H1 (cell line): ENCODE measurements at regions of chr10 and their contacts with region 1.

Region 1: DNA sequence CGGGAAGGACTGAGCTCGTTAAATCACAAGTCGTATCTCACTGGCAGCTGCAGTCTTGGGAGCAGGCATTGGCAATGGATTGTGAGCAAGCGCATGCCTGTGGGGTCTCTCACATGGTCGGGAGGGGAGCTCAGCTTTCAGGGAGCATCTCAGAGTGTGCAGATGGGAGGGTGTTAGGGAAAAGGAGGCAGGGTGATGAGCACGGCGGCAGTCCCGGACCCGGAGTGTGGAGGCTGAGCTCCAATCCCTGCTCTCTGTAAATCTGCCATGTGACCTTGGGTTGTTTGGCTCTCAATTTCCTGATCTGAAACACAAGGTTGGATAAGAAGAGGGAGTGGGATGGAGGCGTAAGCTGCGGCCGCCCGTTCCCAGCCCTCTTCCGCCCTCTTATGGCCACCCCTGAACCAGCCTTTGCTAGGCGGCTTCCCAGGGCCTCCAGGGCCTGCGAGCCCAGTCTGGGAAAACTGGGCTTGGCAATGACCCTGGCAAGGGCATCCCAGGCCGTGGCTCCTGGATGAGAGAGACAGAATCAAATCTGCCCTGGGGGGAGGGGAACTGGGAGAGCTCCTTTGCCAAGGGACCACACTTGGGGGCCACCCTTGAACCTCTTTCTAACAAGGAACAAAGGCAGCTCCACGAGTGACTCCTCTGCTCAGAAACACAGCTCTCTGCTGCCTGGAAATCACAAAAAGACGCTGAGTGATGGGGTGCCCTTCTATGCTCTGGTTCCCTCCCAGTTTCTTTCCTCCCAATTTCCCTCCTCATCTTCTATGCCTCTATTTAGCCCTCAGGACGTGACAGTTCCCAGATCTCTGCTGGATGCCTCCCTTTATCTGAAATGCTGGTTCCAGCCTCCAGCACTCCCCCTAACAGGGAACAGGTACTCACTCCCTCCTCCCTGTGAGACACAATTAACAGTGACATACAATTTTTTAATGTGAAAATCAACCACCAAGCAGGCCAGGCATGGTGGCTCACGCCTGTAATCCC is 41.7 kb upstream of the LOXL4 start:
- DNase-seq: peak; percentile 58 to 86
- H3K4me3 ChIP-seq: peak overlapping the region in 3 of 4 experiments; percentile 13 to 48 (median 36); a peak in 6 of 8 replicates
- H3K27ac ChIP-seq: no peak overlapping the region
- H3K4me1 ChIP-seq: peaks cover 0 to 7% (median 5%) of the 10 kb centered on the region in 4 experiments; a peak in 6 of 7 replicates
- H3K27me3 ChIP-seq: no peaks in the 10 kb centered on the region
- CTCF ChIP-seq: peak; percentile 89 to 94 (median 90)
- EP300 ChIP-seq: no peak
- POLR2A ChIP-seq: no peak
- RAD21 ChIP-seq: peak; percentile 90 to 95

Region 2: DNA sequence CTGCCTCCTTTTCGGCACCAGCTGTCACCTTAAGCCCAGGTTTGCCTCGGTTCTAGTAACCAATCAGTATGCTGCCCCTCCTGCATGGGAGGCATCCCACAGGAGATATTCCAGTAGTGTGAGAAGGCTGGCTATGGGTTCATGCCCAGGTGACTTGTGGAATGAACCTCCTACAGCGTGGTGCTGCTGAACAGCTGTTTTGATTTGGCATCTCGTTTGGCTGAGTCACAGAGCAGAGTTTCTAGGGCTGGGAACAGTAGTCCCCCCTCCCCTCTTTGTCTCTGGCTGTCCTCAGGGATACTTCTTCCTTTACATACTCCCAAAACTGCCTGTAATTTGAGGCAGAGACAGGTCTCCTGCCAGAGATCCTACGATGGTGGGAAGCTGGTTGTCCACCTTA is 159.1 kb before region 1 on chr10:
- CTCF ChIA-PET with region 1: no interaction called
- POLR2A ChIA-PET with region 1: no interaction called
- DNase-seq: no peak
- H3K4me3 ChIP-seq: no peak overlapping the region
- H3K27ac ChIP-seq: no peak overlapping the region
- H3K4me1 ChIP-seq: no peaks in the 10 kb centered on the region
- H3K27me3 ChIP-seq: no peaks in the 10 kb centered on the region
- CTCF ChIP-seq: no peak
- EP300 ChIP-seq: no peak
- POLR2A ChIP-seq: no peak
- RAD21 ChIP-seq: no peak

Region 3: DNA sequence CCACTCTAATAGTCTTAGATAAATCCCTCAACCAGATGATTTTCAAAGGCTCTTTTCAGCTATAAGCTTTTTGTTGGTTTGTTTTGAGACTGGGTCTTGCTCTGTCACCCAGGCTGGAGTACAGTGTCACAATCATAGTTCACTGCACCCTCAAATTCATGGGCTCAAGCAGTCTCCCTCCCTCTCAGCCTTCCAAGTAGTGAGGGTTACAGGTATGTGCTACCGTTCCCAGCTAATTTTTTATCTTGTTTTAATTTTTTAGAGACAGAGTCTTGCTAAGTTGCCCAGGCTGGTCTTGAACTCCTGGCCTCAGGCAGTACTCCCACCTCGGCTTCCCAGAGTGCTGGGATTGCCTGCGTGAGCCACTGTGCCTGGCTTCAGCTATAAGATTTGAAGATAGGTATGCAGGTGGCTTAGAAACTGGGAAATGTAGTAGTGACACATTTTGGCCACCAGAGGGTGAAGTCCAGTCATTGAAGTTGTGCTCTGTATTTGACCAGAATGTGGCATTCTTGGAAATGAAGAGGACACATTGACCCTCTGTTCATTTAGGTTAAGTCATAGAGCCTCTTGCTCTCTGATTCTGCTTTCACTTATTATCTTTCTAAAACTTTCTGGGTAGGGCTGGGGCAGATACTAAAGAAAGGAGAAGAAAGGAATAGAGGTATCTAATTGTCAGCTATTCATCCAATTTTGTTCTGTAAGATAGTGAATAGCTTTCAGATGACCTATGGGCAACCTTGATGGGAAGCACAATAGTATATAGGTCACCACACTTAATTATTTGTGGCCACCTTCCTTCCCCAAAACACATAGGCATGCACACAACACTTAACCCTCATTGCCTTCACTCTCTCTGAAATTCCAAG is 139.2 kb before region 1 on chr10:
- CTCF ChIA-PET with region 1: interaction called, 68 read pairs
- POLR2A ChIA-PET with region 1: no interaction called
- DNase-seq: peak; percentile 46 to 66
- H3K4me3 ChIP-seq: no peak overlapping the region
- H3K27ac ChIP-seq: no peak overlapping the region
- H3K4me1 ChIP-seq: peaks cover 6 to 14% (median 12%) of the 10 kb centered on the region in 4 experiments
- H3K27me3 ChIP-seq: no peaks in the 10 kb centered on the region
- CTCF ChIP-seq: peak in 2 of 3 experiments; percentile 61 to 82; a peak in 3 of 4 replicates
- EP300 ChIP-seq: no peak
- POLR2A ChIP-seq: no peak
- RAD21 ChIP-seq: peak; percentile 66 to 75

Region 4: DNA sequence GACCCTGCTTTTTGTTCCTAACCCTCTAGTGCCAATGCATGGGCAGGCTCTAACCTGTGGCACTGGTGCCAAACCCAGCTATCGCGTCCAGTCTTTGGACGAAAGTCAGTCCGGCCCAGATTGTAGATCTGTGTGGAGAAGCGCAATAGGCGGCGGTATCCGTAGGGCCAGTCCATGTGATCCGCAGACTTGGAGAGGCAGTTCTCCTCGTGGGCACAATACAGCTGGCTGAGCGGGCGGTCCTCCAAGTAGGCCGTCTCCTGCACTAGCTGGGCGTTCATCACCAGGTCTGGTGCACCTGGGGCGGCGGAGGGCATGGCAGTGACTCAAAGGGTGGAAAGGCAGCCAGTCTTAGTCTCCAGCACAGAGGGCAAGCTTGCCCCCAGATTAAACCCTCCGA is 56.2 kb before region 1 on chr10:
- CTCF ChIA-PET with region 1: interaction called, 40 read pairs
- POLR2A ChIA-PET with region 1: no interaction called
- DNase-seq: no peak
- H3K4me3 ChIP-seq: no peak overlapping the region
- H3K27ac ChIP-seq: no peak overlapping the region
- H3K4me1 ChIP-seq: peaks cover 0 to 5% (median under 1%) of the 10 kb centered on the region in 4 experiments; a peak in 3 of 7 replicates
- H3K27me3 ChIP-seq: no peaks in the 10 kb centered on the region
- CTCF ChIP-seq: no peak
- EP300 ChIP-seq: no peak
- POLR2A ChIP-seq: no peak
- RAD21 ChIP-seq: no peak

Region 5: GRCh38 chr10:98269072-98269912 is 40.4 kb before region 1 on chr10:
- CTCF ChIA-PET with region 1: interaction called, 117 read pairs
- POLR2A ChIA-PET with region 1: interaction called, 3 read pairs
- DNase-seq: peak in 1 of 2 experiments; percentile 17
- H3K4me3 ChIP-seq: no peak overlapping the region; a peak in 1 of 8 replicates
- H3K27ac ChIP-seq: no peak overlapping the region
- H3K4me1 ChIP-seq: peaks cover 0 to 16% (median 9%) of the 10 kb centered on the region in 4 experiments; a peak in 6 of 7 replicates
- H3K27me3 ChIP-seq: peaks cover 0 to 12% (median 5%) of the 10 kb centered on the region in 4 experiments; a peak in 4 of 7 replicates
- CTCF ChIP-seq: no peak
- EP300 ChIP-seq: no peak
- POLR2A ChIP-seq: no peak
- RAD21 ChIP-seq: no peak

Region 6: DNA sequence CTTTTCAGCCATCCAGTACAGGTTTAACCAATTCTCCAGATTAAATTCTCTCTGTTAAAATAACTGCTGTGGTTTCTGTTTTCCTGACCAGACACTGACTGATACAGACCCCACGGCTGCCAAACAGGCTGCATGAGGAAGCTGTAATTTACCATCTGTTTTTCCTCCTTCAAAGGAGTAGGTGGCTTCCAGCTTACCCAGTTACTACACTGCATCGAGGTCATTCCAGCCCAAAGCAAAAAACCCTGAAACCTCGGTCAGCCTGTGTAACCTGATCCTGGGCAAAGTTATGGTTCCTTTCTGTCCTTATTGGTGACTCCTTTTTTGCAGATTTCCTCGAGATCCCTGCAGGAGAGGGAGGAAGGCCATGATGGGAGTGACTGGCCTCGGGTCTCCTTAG is 13.8 kb before region 1 on chr10:
- CTCF ChIA-PET with region 1: interaction called, 57 read pairs
- POLR2A ChIA-PET with region 1: interaction called, 3 read pairs
- DNase-seq: no peak
- H3K4me3 ChIP-seq: no peak overlapping the region
- H3K27ac ChIP-seq: no peak overlapping the region
- H3K4me1 ChIP-seq: peaks cover 0 to 12% (median 3%) of the 10 kb centered on the region in 4 experiments; a peak in 5 of 7 replicates
- H3K27me3 ChIP-seq: no peaks in the 10 kb centered on the region
- CTCF ChIP-seq: no peak
- EP300 ChIP-seq: no peak
- POLR2A ChIP-seq: no peak
- RAD21 ChIP-seq: no peak

Region 7: GRCh38 chr10:98331885-98332284 is 22.2 kb after region 1 on chr10:
- CTCF ChIA-PET with region 1: interaction called, 58 read pairs
- POLR2A ChIA-PET with region 1: no interaction called
- DNase-seq: peak; percentile 46 to 59
- H3K4me3 ChIP-seq: no peak overlapping the region
- H3K27ac ChIP-seq: no peak overlapping the region
- H3K4me1 ChIP-seq: no peaks in the 10 kb centered on the region
- H3K27me3 ChIP-seq: no peaks in the 10 kb centered on the region
- CTCF ChIP-seq: peak; percentile 73 to 88 (median 80)
- EP300 ChIP-seq: no peak
- POLR2A ChIP-seq: no peak
- RAD21 ChIP-seq: peak; percentile 72 to 79